ENCODE measurements at regions of chr2 and their contacts with region 1.

Region 1: GRCh38 chr2:36753706-36754221 is 57.3 kb downstream of the VIT start:
- DNase-seq: no peak
- ATAC-seq: peak in 1 of 2 experiments; percentile 30; a peak in 1 of 6 replicates
- H3K4me3 ChIP-seq: no peak overlapping the region
- H3K27ac ChIP-seq: no peak overlapping the region
- H3K4me1 ChIP-seq: no peaks in the 10 kb centered on the region
- CTCF ChIP-seq: no peak
- EP300 ChIP-seq: no peak
- POLR2A ChIP-seq: no peak
- RAD21 ChIP-seq: no peak

Region 2: GRCh38 chr2:36770542-36771287 is 17.0 kb after region 1 on chr2:
- CTCF ChIA-PET with region 1: interaction called, 10 read pairs
- POLR2A ChIA-PET with region 1: no interaction called
- DNase-seq: peak; percentile 74 to 76
- ATAC-seq: peak; percentile 65 to 96
- H3K4me3 ChIP-seq: no peak overlapping the region
- H3K27ac ChIP-seq: no peak overlapping the region
- H3K4me1 ChIP-seq: no peaks in the 10 kb centered on the region
- CTCF ChIP-seq: peak; percentile 78
- EP300 ChIP-seq: no peak
- POLR2A ChIP-seq: no peak
- RAD21 ChIP-seq: peak; percentile 47 to 75; a peak in 4 of 5 replicates

Region 3: DNA sequence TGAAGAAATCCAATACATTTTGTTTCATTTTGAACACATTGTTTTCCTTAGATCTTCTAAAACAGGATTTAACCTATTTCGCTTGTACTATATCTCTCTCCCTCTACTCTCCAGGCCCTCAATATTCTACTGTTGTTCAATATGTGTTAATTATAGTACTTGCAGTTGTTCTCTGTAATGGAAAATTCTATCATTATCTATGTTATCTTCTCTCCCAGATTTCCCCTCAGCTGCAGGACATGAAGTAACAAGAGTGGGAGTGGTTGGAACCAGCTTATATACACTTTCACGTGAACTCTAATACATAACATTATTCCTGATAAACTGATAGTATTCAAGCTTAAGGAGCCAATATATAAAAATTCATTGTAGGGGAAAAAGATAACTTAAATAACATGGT is 219.6 kb after region 1 on chr2:
- CTCF ChIA-PET with region 1: no interaction called
- POLR2A ChIA-PET with region 1: no interaction called
- DNase-seq: no peak
- ATAC-seq: no peak
- H3K4me3 ChIP-seq: no peak overlapping the region
- H3K27ac ChIP-seq: no peak overlapping the region
- H3K4me1 ChIP-seq: no peaks in the 10 kb centered on the region
- CTCF ChIP-seq: no peak
- EP300 ChIP-seq: no peak
- POLR2A ChIP-seq: no peak
- RAD21 ChIP-seq: no peak

Region 4: DNA sequence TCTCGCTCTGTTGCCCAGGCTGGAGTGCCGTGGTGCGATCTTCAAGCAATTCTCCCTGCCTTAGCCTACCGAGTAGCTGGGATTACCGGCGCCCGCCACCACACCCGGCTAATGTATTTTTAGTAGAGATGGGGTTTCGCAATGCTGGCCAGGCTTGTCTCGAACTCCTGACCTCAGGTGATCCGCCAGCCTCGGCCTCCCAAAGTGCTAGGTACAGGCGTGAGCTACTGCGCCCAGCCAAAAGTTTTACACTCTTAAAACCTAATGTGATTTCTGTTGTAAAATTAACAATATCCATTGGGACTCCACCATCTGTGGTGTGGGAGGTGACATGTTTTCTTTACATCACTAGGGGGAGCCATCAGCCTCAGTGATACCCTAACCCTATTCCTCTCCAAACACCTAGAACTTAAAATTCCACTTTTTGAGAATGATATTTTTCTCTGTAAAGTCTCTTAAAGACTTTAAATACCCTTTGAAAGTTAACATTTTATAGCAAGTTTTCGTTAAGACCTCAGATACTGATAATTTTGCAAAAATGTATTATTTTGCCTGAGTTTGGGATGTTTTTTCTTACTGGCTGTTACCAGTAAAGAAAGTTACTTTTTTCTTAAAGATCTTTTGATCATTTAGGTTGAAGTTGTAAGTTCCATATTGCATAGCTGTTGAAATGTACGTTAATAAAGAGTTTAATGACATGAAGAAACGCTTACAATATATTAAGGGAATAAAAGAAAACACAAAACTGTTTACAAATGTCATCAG is 414.6 kb after region 1 on chr2:
- CTCF ChIA-PET with region 1: no interaction called
- POLR2A ChIA-PET with region 1: no interaction called
- DNase-seq: peak; percentile 60 to 78
- ATAC-seq: peak; percentile 89 to 97
- H3K4me3 ChIP-seq: no peak overlapping the region
- H3K27ac ChIP-seq: peak overlapping the region; percentile 44 to 75
- H3K4me1 ChIP-seq: peaks cover 10% of the 10 kb centered on the region; the same call in 1 of the 3 replicates
- CTCF ChIP-seq: peak; percentile 81
- EP300 ChIP-seq: no peak
- POLR2A ChIP-seq: no peak
- RAD21 ChIP-seq: peak; percentile 72 to 83